Activated naive CD4-positive, alpha-beta T cell treated with anti-CD3 and anti-CD28 coated beads, Interleukin-2, amount 10 ng/mL, durations not matched to agents 7 days and 5 days (primary cell): ENCODE measurements at regions of chr7 and their contacts with region 1.

Region 1: DNA sequence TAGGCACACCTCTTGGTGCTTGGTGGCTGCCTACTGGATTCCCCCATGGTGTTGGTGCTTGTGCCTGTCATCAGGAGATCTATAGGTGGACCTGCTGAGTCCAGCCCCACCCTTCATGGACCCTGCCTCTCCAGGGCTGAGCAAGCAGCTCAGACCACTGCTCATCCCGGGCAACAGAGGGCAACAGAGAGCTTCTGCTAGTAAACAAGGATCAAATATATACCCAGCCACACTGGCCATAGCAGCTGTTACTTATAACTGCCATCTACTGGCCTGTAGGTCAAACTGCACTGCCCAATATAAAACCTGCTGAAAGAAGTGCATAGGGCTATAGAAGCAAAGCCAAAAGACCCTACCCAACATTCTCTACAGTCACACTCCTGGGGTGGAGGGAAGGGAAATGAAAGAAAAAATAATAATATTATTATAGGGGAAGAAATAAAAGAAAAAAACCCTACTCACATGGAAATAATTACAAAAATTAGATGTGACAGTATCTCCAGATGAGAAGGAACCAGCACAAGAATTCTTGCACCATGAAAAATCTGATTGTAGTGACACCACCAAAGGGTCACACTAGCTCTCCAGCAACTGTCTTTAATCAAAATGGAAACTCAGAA is 54.9 kb upstream of the ZNF800 start:
- DNase-seq: peak; percentile 77
- H3K4me3 Mint-ChIP-seq: no peak overlapping the region
- H3K27ac Mint-ChIP-seq: no peak overlapping the region
- H3K4me1 Mint-ChIP-seq: peaks cover 35% of the 10 kb centered on the region
- H3K27me3 Mint-ChIP-seq: peaks cover 55% of the 10 kb centered on the region

Region 2: GRCh38 chr7:127251020-127251464 is 196.4 kb before region 1 on chr7:
- CTCF ChIA-PET with region 1: interaction called, 12 read pairs
- DNase-seq: no peak
- H3K4me3 Mint-ChIP-seq: no peak overlapping the region
- H3K27ac Mint-ChIP-seq: no peak overlapping the region
- H3K4me1 Mint-ChIP-seq: peaks cover 11% of the 10 kb centered on the region
- H3K27me3 Mint-ChIP-seq: peaks cover 94% of the 10 kb centered on the region

Region 3: DNA sequence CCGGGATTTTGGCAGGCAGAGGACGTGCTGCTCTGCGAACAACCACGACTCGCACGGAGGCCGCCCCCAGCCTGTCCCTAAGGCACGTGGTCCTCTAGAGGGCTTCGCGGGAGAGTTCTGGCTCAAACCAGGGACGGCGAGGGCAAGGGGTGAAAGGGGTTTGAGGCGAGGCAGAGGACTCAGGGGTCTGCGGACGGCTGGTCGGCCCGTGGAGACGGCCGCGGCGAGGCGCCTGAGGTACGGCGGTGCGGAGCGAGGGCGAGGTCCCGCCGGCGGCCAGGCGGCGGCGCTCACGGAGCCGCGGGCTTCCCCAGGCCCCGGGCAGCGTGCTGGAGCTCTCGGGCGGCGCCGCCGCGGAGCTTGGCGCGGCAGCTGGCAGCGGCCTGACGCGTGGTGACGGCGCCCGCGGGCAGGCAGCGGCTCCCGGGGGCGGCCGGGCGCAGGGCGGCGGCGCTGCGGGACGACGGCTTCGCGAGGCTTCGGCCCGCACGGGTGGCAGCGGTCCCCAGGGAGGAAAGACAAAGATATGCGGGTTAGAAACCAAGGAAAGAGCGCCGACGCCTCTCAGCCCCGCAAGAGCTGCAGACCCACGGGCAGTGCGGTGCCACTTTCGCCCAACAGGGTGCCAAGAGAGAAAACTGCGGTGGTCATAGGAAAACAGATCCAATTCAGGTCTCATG is 99.7 kb before region 1 on chr7:
- CTCF ChIA-PET with region 1: interaction called, 38 read pairs
- DNase-seq: peak; percentile 77
- H3K4me3 Mint-ChIP-seq: peak overlapping the region; percentile 34
- H3K27ac Mint-ChIP-seq: no peak overlapping the region
- H3K4me1 Mint-ChIP-seq: peaks cover 9% of the 10 kb centered on the region
- H3K27me3 Mint-ChIP-seq: peaks cover 22% of the 10 kb centered on the region

Region 4: GRCh38 chr7:127380479-127380878 is 67.0 kb before region 1 on chr7:
- CTCF ChIA-PET with region 1: no interaction called
- DNase-seq: no peak
- H3K4me3 Mint-ChIP-seq: no peak overlapping the region
- H3K27ac Mint-ChIP-seq: no peak overlapping the region
- H3K4me1 Mint-ChIP-seq: peaks cover 55% of the 10 kb centered on the region
- H3K27me3 Mint-ChIP-seq: no peaks in the 10 kb centered on the region

Region 5: DNA sequence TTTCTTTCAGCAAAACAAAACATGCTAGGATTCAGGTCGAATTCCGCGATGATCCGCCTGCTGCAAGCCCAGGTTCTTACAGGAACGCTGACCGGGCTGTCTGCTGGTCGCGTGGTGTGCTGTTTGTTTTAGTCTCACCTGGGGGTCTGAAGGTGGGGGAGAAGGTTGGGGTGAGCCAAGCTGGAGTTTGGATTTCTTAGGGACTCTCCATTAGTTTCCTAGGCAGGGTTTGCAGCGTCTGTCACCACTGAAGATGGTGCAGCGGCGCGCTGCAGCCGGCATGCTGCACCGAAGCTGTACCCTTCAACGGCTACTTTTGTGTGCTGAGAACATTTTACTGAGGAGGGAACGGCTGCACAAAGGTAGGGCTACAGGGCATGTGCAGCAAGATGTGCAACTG is 89.3 kb after region 1 on chr7:
- CTCF ChIA-PET with region 1: no interaction called
- DNase-seq: no peak
- H3K4me3 Mint-ChIP-seq: no peak overlapping the region
- H3K27ac Mint-ChIP-seq: no peak overlapping the region
- H3K4me1 Mint-ChIP-seq: peaks cover 6% of the 10 kb centered on the region
- H3K27me3 Mint-ChIP-seq: peaks cover 28% of the 10 kb centered on the region

Region 6: DNA sequence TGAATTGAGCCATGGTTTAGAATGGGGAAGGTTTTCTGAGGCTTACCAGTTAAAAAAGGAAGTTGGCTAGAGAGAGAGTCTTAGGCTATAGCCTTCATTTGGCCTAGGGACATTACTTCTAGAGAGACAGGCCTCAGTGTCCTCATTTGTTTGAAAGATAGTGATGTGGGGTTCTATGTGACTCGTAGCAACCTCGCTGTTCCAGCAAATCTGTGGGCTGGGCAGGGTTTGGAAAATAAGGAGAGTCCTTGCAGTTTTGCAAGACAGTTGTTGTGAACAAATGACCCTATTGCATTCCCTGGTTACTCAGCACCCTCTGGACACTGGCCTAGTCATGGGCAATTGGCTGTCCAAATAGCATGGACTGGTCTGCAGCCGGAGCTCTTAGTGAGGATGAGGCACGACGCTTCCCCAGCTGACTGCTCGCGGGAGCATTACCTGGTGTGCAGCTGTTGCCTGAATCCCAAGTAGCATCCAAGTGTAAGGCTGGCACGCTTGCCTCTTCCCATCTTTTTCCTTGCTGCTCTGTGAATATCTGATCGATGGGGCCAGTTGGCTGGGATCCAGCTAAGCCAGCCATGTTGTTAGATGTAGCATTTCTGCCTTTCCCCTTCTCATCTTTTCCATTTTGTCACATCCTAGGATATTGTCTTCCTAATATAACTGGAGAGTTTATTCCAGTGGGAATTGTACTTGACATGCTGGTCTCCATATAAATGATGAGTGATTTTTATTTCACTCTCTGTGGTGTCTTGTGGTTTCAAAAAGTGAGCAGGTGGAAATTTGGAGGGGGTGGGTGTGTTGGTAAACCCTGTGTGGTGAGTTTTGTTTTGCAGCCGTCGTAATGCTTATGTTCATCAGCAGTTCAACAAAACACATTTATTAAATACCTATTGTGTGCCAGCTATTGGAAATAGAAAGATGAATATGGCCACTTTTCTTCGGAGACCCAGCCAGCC is 304.3 kb after region 1 on chr7:
- CTCF ChIA-PET with region 1: no interaction called
- DNase-seq: no peak
- H3K4me3 Mint-ChIP-seq: no peak overlapping the region
- H3K27ac Mint-ChIP-seq: no peak overlapping the region
- H3K4me1 Mint-ChIP-seq: no peaks in the 10 kb centered on the region
- H3K27me3 Mint-ChIP-seq: no peaks in the 10 kb centered on the region